ENCODE measurements at regions of chr11 and their contacts with region 1.

Region 1: GRCh38 chr11:68903288-68904247 is at the starts of genes IGHMBP2 and MRPL21:
- DNase-seq: peak; percentile 80 to 92 (median 85)
- H3K4me3 ChIP-seq: peak within 1 kb of the TSS; percentile 88
- H3K27ac ChIP-seq: peak within 1 kb of the TSS; percentile 58 to 85
- H3K4me1 ChIP-seq: peaks cover 9% of the 10 kb centered on the region
- H3K27me3 ChIP-seq: no peaks in the 10 kb centered on the region
- CTCF ChIP-seq: no peak
- EP300 ChIP-seq: no peak
- POLR2A ChIP-seq: peak; percentile 72
- total RNA-seq, gene IGHMBP2: 8.3 to 18.9 (median 16.2) TPM
- total RNA-seq, gene MRPL21: 40.3 to 70.7 (median 51.9) TPM

Region 2: DNA sequence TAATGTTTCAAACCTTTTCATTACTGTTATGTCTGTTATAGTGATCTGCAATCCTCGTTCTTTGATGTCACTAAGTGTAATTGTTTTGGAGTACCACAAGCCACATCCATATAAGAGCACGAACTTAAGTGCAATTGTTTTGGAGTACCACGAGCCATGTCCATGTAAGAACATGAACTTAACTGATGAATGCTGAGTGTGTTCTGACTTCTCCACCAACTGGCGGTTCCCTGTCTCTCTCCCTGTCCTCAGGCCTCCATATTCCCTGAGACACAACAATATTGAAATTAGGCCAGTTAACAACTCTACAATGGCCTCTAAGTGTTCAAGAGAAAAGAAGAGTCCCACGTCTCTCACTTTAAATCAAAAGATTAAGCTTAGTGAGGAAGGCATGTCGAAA is 175.8 kb before region 1 on chr11:
- intact Hi-C with region 1: no loop called
- DNase-seq: no peak
- H3K4me3 ChIP-seq: no peak overlapping the region
- H3K27ac ChIP-seq: no peak overlapping the region
- H3K4me1 ChIP-seq: no peaks in the 10 kb centered on the region
- H3K27me3 ChIP-seq: no peaks in the 10 kb centered on the region
- CTCF ChIP-seq: no peak
- EP300 ChIP-seq: no peak
- POLR2A ChIP-seq: no peak

Region 3: DNA sequence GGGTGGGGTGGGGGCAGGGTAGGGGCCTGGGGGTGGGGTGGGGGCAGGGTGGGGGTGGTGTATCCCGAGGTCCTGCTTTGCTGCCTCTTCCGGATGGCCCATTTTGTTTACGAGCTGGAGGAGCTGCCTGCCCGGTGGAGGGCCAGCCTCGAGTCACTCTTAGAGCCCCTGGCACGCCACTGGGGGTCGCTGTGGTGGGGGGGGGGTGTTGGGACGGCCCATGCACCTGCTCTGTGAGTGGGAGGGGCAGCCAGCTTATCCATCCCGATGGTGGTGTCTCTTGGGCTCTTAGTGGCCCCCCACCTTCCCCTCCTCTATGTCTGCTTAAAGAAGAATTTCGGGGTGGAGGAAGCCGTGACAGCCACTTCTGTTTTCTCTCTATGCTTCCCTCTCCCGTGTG is 52.6 kb after region 1 on chr11:
- intact Hi-C with region 1: no loop called
- DNase-seq: peak in 1 of 5 donors; percentile 50
- H3K4me3 ChIP-seq: no peak overlapping the region
- H3K27ac ChIP-seq: no peak overlapping the region
- H3K4me1 ChIP-seq: peaks cover 2% of the 10 kb centered on the region
- H3K27me3 ChIP-seq: no peaks in the 10 kb centered on the region
- CTCF ChIP-seq: no peak
- EP300 ChIP-seq: no peak
- POLR2A ChIP-seq: no peak

Region 4: DNA sequence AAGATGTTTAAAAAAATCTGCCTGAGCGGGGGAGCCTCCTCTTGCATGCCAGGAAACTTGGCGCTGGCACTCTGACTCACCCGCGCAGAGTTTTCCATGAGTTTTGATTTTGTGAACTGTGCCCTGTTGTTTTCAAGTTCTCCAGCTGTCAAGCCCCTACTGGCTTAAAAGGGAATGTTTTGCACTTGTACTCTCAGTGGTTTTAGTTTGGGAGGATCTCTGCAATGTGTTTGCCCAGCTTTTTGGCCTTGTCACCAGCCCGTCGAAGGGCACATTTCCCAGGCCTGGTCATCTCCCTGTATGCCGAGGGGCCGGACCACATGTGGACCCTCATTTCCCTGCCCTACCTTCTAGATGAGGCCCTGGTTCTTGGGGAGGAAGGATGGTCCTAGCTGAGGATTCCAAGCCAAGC is 97.3 kb after region 1 on chr11:
- intact Hi-C with region 1: loop called in 1 of 4 experiments (anchors 10 kb)
- DNase-seq: peak; percentile 68 to 83 (median 77)
- H3K4me3 ChIP-seq: no peak overlapping the region
- H3K27ac ChIP-seq: peak overlapping the region; percentile 23 to 83
- H3K4me1 ChIP-seq: peaks cover 29% of the 10 kb centered on the region
- H3K27me3 ChIP-seq: no peaks in the 10 kb centered on the region
- CTCF ChIP-seq: peak; percentile 56 to 79 (median 77)
- EP300 ChIP-seq: no peak
- POLR2A ChIP-seq: peak; percentile 27

Region 5: GRCh38 chr11:69075421-69076128 is 172.0 kb after region 1 on chr11:
- intact Hi-C with region 1: loop called in 1 of 4 experiments (anchors 10 kb)
- DNase-seq: peak; percentile 95 to 97 (median 96)
- H3K4me3 ChIP-seq: no peak overlapping the region
- H3K27ac ChIP-seq: peak overlapping the region; percentile 80
- H3K4me1 ChIP-seq: peaks cover 4% of the 10 kb centered on the region
- H3K27me3 ChIP-seq: no peaks in the 10 kb centered on the region
- CTCF ChIP-seq: no peak
- EP300 ChIP-seq: no peak
- POLR2A ChIP-seq: peak; percentile 31

Region 6: GRCh38 chr11:69088676-69089146 is 185.1 kb after region 1 on chr11:
- intact Hi-C with region 1: loop called in 1 of 4 experiments (anchors 5 kb)
- DNase-seq: peak; percentile 69 to 86 (median 82)
- H3K4me3 ChIP-seq: no peak overlapping the region
- H3K27ac ChIP-seq: no peak overlapping the region
- H3K4me1 ChIP-seq: no peaks in the 10 kb centered on the region
- H3K27me3 ChIP-seq: no peaks in the 10 kb centered on the region
- CTCF ChIP-seq: peak; percentile 71 to 79 (median 75)
- EP300 ChIP-seq: no peak
- POLR2A ChIP-seq: no peak

Measured in ovary (tissue), 10 donors.